ENCODE measurements at regions of chr10 and their contacts with region 1.

Region 1: DNA sequence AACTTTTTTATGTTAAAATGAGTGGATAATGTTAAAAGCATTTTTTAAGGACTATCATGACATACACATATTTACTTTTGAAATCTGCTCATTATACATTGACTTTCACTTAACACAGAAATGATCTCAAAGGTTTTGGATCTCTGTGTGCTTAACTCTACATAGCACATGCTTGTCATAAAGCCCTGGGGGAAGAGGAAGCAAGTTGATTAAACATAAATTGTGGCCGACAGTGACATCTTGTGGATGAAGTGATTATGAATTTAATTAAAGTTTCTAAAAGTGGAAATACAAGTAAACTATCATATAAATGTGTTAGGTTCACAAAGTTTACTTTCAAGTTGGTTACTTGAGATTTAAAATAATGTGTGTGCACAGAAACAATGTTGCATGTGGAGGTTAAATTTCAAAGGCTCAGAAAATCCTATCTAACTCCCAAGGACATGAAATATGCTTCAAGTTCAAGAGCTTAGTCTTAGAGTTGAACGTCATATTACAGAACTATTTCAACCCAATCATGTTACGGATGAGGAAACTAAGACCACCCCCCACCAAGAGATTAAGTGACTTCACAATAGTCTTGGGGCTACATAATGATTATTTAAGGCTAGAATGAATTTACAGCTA is 1247.7 kb downstream of the GATA3 start:
- H3K4me3 Mint-ChIP-seq: no peak overlapping the region
- H3K27ac Mint-ChIP-seq: no peak overlapping the region
- H3K4me1 Mint-ChIP-seq: no peaks in the 10 kb centered on the region
- H3K27me3 Mint-ChIP-seq: no peaks in the 10 kb centered on the region

Region 2: GRCh38 chr10:7525314-7526016 is 1776.8 kb before region 1 on chr10:
- intact Hi-C with region 1: loop called (anchors 1 kb)
- H3K4me3 Mint-ChIP-seq: no peak overlapping the region
- H3K27ac Mint-ChIP-seq: no peak overlapping the region
- H3K4me1 Mint-ChIP-seq: no peaks in the 10 kb centered on the region
- H3K27me3 Mint-ChIP-seq: peaks cover 17% of the 10 kb centered on the region

Region 3: GRCh38 chr10:7687228-7687907 is 1614.9 kb before region 1 on chr10:
- intact Hi-C with region 1: loop called (anchors 10 kb)
- H3K4me3 Mint-ChIP-seq: no peak overlapping the region
- H3K27ac Mint-ChIP-seq: no peak overlapping the region
- H3K4me1 Mint-ChIP-seq: no peaks in the 10 kb centered on the region
- H3K27me3 Mint-ChIP-seq: peaks cover 16% of the 10 kb centered on the region

Region 4: DNA sequence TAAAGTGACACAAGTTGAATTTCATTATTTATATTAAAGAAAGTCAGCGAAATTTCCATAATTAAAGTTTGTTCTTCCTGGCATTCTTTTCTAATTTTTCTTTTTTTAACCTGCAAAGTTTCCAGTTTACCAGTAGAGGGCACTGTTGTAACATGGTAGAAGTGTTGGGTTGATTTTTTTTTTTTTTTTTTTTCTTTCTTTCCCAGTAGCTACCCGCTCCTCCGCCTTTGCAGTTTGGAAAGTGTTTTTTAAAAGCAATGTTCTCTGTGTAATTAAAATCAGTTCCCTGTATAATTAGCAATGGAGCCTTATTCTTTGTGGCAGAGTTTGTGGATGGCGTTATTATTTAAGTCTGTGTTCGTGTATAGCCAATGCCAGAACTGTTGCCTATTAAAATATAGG is 1430.2 kb before region 1 on chr10:
- intact Hi-C with region 1: loop called (anchors 1 kb)
- H3K4me3 Mint-ChIP-seq: peak overlapping the region; percentile 76
- H3K27ac Mint-ChIP-seq: no peak overlapping the region
- H3K4me1 Mint-ChIP-seq: peaks cover 5% of the 10 kb centered on the region
- H3K27me3 Mint-ChIP-seq: no peaks in the 10 kb centered on the region

Region 5: GRCh38 chr10:9209105-9209798 is 93.0 kb before region 1 on chr10:
- intact Hi-C with region 1: loop called (anchors 5 kb)
- H3K4me3 Mint-ChIP-seq: no peak overlapping the region
- H3K27ac Mint-ChIP-seq: no peak overlapping the region
- H3K4me1 Mint-ChIP-seq: no peaks in the 10 kb centered on the region
- H3K27me3 Mint-ChIP-seq: no peaks in the 10 kb centered on the region

Region 6: GRCh38 chr10:9550810-9551209 is 248.6 kb after region 1 on chr10:
- intact Hi-C with region 1: no loop called
- H3K4me3 Mint-ChIP-seq: no peak overlapping the region
- H3K27ac Mint-ChIP-seq: no peak overlapping the region
- H3K4me1 Mint-ChIP-seq: no peaks in the 10 kb centered on the region
- H3K27me3 Mint-ChIP-seq: no peaks in the 10 kb centered on the region